Activated T-helper 1 cell treated with anti-CD3 and anti-CD28 coated beads, Interleukin-12 subunit alpha, Interleukin-12 subunit beta, Interleukin-2, Interleukin-4 antibody, amounts not matched to agents 30 ng/mL and 10 ng/mL and 1 ng/mL, durations not matched to agents 14 hours and 24 hours and 36 hours (primary cell): ENCODE measurements at regions of chr21 and their contacts with region 1.

Region 1: GRCh38 chr21:29002442-29003144 is 9.9 kb upstream of the LTN1 start:
- DNase-seq: peak; percentile 93
- H3K4me3 Mint-ChIP-seq: peak overlapping the region; percentile 90
- H3K27ac Mint-ChIP-seq: peak overlapping the region; percentile 97
- H3K4me1 Mint-ChIP-seq: peaks cover 5% of the 10 kb centered on the region
- H3K27me3 Mint-ChIP-seq: no peaks in the 10 kb centered on the region

Region 2: GRCh38 chr21:28590676-28591075 is 411.9 kb before region 1 on chr21:
- intact Hi-C with region 1: no loop called
- DNase-seq: no peak
- H3K4me3 Mint-ChIP-seq: no peak overlapping the region
- H3K27ac Mint-ChIP-seq: no peak overlapping the region
- H3K4me1 Mint-ChIP-seq: no peaks in the 10 kb centered on the region
- H3K27me3 Mint-ChIP-seq: no peaks in the 10 kb centered on the region

Region 3: DNA sequence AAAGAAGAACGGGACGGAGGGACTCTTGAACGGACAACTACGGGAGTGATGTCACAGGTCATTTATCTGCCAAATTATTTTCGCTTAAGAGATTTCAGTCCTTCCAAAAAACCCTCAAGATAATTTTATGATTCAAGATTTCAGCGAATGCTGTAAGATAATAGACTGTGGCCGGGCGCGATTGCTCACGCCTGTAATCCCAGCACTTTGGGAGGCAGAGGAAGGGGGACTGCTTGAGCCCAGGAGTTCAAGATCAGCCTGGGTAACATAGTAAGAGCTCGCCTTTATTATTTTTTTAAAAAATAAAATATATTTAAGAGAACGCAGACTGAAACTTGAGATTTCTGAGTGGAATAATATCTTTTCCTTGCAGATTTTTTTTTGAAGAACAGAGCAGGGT is 15.9 kb after region 1 on chr21:
- intact Hi-C with region 1: loop called (anchors 1 kb)
- DNase-seq: no peak
- H3K4me3 Mint-ChIP-seq: peak overlapping the region; percentile 91
- H3K27ac Mint-ChIP-seq: peak overlapping the region; percentile 89
- H3K4me1 Mint-ChIP-seq: peaks cover 27% of the 10 kb centered on the region
- H3K27me3 Mint-ChIP-seq: no peaks in the 10 kb centered on the region

Region 4: DNA sequence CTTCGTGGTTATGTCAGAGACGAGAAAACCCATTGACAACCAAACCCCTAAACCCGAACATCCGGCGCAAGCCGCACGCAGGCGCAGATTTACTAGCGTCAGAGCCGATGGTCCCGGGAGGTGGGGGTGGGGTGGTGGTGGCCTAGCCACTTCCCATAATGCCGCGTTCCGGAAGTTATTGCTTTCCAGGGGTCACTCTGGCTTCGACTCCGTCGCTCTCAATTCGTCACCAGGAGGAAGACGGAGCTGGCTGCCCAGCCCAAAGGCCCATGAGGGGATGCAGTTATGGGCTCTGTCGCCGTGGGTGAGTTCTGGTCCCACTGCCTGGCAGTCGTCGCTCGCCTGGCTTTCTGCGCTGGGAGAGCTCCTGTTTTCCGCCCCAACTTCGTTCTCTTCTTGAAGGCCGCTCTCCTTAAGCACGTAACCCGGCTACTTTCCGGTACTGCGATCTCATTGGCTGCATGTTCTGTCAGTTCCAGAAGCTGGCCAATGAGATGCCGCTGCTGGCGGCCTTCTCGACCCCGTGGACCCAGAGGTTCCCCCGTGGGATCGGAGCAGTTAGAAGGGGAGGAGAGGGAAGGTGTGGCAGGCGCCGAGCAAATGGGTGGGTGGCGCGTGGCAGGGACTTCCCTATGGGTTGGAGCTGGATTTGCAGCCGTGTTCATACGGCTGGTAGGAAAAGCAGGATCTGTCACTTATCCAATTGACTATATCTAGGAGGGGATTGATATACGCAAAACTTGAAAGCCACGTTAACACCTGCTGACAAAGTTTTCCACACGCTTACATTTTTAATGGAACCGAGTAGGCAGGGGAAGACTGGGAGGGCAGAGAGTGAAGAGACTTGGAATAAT is 22.1 kb after region 1 on chr21 and contains the start of gene USP16:
- intact Hi-C with region 1: loop called (anchors 1 kb)
- DNase-seq: peak; percentile 95
- H3K4me3 Mint-ChIP-seq: peak within 1 kb of the TSS; percentile 99
- H3K27ac Mint-ChIP-seq: peak within 1 kb of the TSS; percentile 97
- H3K4me1 Mint-ChIP-seq: peaks cover 39% of the 10 kb centered on the region
- H3K27me3 Mint-ChIP-seq: no peaks in the 10 kb centered on the region
- total RNA-seq, gene USP16: 44.7 and 48.7 TPM in 2 replicates

Region 5: GRCh38 chr21:29443411-29444010 is 440.9 kb after region 1 on chr21:
- intact Hi-C with region 1: no loop called
- DNase-seq: no peak
- H3K4me3 Mint-ChIP-seq: no peak overlapping the region
- H3K27ac Mint-ChIP-seq: no peak overlapping the region
- H3K4me1 Mint-ChIP-seq: no peaks in the 10 kb centered on the region
- H3K27me3 Mint-ChIP-seq: peaks cover 2% of the 10 kb centered on the region